Body of pancreas (tissue), 4 donors: ENCODE measurements at regions of chr11 and their contacts with region 1.

Region 1: DNA sequence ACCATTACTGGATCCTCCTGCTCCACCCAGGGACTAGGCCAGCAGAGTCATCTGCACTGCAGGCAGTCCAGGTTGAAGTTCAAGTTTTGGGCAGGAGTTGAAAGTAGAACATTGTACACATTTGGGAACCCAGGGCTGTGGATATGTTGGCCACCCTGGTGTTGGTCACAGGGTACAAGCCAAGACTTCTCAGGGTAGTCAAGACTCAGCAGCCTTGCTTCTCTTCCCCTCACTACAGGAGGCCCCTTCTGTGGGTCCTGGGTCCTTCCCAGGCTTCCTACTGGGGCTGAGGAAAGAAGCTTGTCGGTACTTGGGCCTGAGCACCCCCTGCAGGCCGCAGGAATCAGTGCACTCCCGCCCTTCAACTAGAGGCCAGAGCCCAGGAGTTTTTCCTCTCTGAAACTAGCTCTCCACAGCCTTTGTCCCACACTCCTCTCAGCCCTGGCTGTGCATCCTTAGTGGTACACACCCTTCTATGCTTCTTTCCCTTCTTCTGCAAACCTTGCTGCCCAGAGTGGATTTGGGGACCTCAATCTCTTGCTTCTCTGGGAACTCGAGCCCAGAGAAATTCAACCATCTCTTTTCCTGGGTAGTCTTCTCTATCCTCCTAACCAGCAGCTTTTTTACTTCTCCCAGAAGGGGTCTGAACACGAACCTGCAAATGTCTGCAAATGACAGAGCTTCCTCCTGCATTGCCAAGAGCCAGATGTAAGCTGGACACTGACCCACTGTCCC is 2.6 kb upstream of the HPX start:
- DNase-seq: peak; percentile 60 to 66 (median 62)
- ATAC-seq: peak; percentile 80
- H3K4me3 ChIP-seq: no peak overlapping the region
- H3K27ac ChIP-seq: no peak overlapping the region
- H3K4me1 ChIP-seq: peaks cover 9% of the 10 kb centered on the region
- H3K27me3 ChIP-seq: no peaks in the 10 kb centered on the region
- CTCF ChIP-seq: peak; percentile 67 to 77 (median 73)
- POLR2A ChIP-seq: no peak

Region 2: GRCh38 chr11:6377902-6378639 is 65.4 kb before region 1 on chr11:
- intact Hi-C with region 1: loop called (anchors 5 kb)
- DNase-seq: no peak
- ATAC-seq: no peak
- H3K4me3 ChIP-seq: no peak overlapping the region
- H3K27ac ChIP-seq: no peak overlapping the region
- H3K4me1 ChIP-seq: no peaks in the 10 kb centered on the region
- H3K27me3 ChIP-seq: no peaks in the 10 kb centered on the region
- CTCF ChIP-seq: no peak
- POLR2A ChIP-seq: no peak

Region 3: DNA sequence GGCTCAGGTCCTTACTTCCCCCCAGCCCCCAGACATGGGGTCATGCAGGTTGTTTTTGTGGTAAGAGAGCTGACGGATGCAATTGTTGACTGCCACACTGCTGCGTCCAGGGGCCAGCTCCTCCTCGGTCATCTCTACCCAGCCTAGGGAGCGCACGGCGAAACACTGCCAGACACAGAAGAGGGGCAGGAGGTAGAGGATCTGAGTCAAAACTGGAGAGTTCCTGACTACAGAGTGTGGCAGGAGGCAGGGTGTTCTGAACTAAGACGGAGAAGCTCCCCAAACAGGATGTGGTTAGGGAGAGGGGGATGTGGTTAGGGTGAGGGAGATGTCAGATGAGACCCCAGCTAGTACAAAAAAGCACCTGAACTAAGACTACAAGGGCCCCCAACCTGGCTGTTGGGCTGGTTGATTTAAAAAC is 40.9 kb before region 1 on chr11:
- intact Hi-C with region 1: no loop called
- DNase-seq: no peak
- ATAC-seq: no peak
- H3K4me3 ChIP-seq: no peak overlapping the region
- H3K27ac ChIP-seq: no peak overlapping the region
- H3K4me1 ChIP-seq: no peaks in the 10 kb centered on the region
- H3K27me3 ChIP-seq: no peaks in the 10 kb centered on the region
- CTCF ChIP-seq: no peak
- POLR2A ChIP-seq: no peak

Region 4: GRCh38 chr11:6504166-6504565 is 60.7 kb after region 1 on chr11:
- intact Hi-C with region 1: loop called (anchors 5 kb)
- DNase-seq: no peak
- ATAC-seq: no peak
- H3K4me3 ChIP-seq: no peak overlapping the region
- H3K27ac ChIP-seq: no peak overlapping the region
- H3K4me1 ChIP-seq: no peaks in the 10 kb centered on the region
- H3K27me3 ChIP-seq: no peaks in the 10 kb centered on the region
- CTCF ChIP-seq: no peak
- POLR2A ChIP-seq: no peak